PC-3 (cell line): ENCODE measurements at regions of chr4 and their contacts with region 1.

Region 1: GRCh38 chr4:73245955-73246354 is 12.6 kb downstream of the ANKRD17 start:
- DNase-seq: no peak
- ATAC-seq: no peak
- H3K4me3 ChIP-seq: no peak overlapping the region
- H3K27ac ChIP-seq: no peak overlapping the region
- H3K4me1 ChIP-seq: no peaks in the 10 kb centered on the region
- H3K27me3 ChIP-seq: no peaks in the 10 kb centered on the region
- CTCF ChIP-seq: no peak

Region 2: DNA sequence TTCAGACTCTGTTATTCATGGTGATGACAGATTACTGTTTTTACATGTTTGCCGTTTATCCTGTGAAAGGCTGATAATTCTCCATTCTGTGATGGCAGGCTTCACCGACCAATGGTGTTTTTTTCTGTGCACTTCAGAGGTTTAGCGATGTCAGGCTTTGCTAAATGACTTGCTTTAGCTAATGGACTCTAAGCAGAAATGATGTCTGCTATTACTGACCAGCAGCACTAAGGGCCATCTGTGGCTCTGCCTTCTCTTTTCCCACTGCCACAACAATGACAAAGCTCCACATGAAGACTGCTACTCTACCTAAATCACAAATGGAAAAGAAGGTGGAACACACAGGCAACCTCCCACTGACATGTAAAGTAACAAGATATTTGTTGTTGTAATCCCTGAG is 89.7 kb after region 1 on chr4:
- CTCF ChIA-PET with region 1: no interaction called
- POLR2A ChIA-PET with region 1: no interaction called
- intact Hi-C with region 1: no loop called
- DNase-seq: no peak
- ATAC-seq: no peak
- H3K4me3 ChIP-seq: no peak overlapping the region
- H3K27ac ChIP-seq: no peak overlapping the region
- H3K4me1 ChIP-seq: no peaks in the 10 kb centered on the region
- H3K27me3 ChIP-seq: 0 out of 2 replicates have a peak, but pooled peaks cover 3% of the 10 kb centered on the region
- CTCF ChIP-seq: no peak

Region 3: DNA sequence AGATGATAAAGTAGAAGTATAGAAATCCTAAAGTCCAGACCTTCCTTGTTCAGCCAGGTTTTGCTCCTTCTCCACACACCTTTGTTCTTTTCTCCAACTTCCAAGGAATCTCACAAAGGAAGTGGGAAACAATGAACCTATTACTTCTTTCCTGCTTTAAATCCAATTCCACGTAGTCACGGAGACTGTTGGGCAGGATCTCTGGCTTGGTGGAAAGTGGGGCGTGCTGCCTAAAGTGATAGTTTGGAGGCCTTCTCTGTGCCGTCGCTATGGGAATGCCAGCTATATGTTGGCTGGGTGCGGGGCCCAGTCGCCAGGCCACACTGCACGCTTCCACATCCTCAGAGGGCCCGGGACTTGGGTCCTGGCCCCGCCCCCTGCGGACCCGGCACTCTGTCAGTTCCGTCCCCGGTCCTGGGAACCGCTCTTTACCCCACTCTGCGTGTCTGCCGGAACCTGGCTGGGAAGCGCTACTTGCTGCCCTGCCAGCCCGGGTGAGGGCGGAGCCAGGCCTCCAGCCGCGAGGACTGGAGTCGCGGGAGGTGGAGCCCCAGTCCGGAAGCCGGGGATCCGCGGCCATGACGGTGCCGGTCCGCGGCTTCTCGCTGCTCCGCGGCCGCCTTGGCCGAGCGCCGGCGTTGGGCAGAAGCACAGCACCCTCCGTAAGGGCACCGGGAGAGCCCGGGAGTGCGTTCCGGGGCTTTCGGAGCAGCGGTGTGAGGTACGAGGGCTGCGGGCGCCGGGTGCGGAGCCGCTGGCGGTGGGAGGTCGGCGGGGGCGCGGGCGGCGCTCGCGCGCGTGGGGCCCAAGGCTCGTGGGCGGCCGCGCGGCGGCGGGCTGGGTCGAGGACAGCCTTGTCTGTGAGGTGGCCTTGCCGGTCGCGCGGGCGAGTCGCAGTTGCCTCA is 911.9 kb after region 1 on chr4 and contains the start of gene MTHFD2L:
- CTCF ChIA-PET with region 1: no interaction called
- POLR2A ChIA-PET with region 1: interaction called, 25 read pairs
- intact Hi-C with region 1: no loop called
- DNase-seq: peak; percentile 99
- ATAC-seq: peak; percentile 96
- H3K4me3 ChIP-seq: peak within 1 kb of the TSS; percentile 82
- H3K27ac ChIP-seq: peak within 1 kb of the TSS; percentile 84
- H3K4me1 ChIP-seq: peaks cover 27% of the 10 kb centered on the region
- H3K27me3 ChIP-seq: no peaks in the 10 kb centered on the region
- CTCF ChIP-seq: no peak
- total RNA-seq, gene MTHFD2L: 33.4 and 34.0 TPM in 2 replicates